Activated T-helper 2 cell treated with anti-CD3 and anti-CD28 coated beads, Interferon-gamma antibody, Interleukin-2, Interleukin-4, amounts not matched to agents 10 μg/mL and 5 μg/mL and 100 μg/mL, durations not matched to agents 14 hours and 24 hours and 36 hours (primary cell): ENCODE measurements at regions of chr10 and their contacts with region 1.

Region 1: DNA sequence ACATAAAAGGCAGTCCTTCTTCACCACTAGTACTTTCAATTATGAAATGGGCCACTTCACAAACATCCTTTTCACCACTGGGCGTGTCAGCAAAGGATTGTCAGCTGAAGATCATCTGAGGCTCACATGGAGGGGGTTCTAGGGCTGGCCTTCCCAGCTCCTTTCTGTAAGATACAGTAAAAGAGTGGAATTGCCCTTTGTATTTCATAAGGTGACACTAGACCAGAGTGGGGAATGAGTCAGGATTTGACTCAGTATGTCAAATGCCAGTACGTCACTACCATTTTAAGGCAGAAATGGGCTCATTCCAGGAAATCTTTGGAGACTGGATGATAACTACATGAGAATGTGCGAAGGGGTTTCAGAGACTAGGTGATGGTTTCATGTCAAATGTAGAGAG is 21.2 kb upstream of the BLOC1S2 start:
- DNase-seq: no peak
- H3K4me3 Mint-ChIP-seq: no peak overlapping the region
- H3K27ac Mint-ChIP-seq: no peak overlapping the region
- H3K4me1 Mint-ChIP-seq: no peaks in the 10 kb centered on the region
- H3K27me3 Mint-ChIP-seq: peaks cover 60% of the 10 kb centered on the region

Region 2: GRCh38 chr10:100327007-100327717 is 19.5 kb after region 1 on chr10:
- intact Hi-C with region 1: loop called (anchors 2 kb)
- DNase-seq: peak; percentile 42
- H3K4me3 Mint-ChIP-seq: peak overlapping the region; percentile 13
- H3K27ac Mint-ChIP-seq: peak overlapping the region; percentile 84
- H3K4me1 Mint-ChIP-seq: peaks cover 16% of the 10 kb centered on the region
- H3K27me3 Mint-ChIP-seq: peaks cover 17% of the 10 kb centered on the region